A673 (cell line): ENCODE measurements at regions of chr18 and their contacts with region 1.

Region 1: DNA sequence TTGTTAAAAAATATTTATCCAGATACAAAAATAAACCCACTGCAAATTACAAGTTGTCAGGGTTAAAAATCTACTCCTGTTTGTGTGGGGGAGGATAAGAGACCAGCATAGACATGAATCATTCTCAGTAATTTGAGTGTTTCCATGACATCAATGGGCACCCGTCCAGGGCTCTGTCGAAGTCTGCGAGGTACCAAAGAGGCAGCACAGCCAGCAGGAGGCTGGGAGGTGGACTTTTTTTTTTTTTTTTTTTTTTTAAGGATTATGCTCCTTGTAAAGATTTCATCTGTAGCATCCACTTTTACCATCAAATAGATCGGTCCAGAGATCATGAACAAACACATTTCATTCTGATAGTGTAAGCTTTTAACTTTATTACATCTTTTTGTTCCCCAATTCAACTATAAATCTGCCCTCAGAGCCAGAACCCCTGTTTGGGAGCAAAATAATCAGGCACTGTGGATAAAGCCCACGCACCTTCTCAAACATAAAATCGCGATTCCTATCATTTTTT is 182.0 kb downstream of the TCF4 start:
- DNase-seq: peak; percentile 97
- H3K4me3 ChIP-seq: peak overlapping the region; percentile 43
- H3K27ac ChIP-seq: peak overlapping the region; percentile 76
- H3K4me1 ChIP-seq: peaks cover 63% of the 10 kb centered on the region
- H3K27me3 ChIP-seq: no peaks in the 10 kb centered on the region
- CTCF ChIP-seq: no peak

Region 2: DNA sequence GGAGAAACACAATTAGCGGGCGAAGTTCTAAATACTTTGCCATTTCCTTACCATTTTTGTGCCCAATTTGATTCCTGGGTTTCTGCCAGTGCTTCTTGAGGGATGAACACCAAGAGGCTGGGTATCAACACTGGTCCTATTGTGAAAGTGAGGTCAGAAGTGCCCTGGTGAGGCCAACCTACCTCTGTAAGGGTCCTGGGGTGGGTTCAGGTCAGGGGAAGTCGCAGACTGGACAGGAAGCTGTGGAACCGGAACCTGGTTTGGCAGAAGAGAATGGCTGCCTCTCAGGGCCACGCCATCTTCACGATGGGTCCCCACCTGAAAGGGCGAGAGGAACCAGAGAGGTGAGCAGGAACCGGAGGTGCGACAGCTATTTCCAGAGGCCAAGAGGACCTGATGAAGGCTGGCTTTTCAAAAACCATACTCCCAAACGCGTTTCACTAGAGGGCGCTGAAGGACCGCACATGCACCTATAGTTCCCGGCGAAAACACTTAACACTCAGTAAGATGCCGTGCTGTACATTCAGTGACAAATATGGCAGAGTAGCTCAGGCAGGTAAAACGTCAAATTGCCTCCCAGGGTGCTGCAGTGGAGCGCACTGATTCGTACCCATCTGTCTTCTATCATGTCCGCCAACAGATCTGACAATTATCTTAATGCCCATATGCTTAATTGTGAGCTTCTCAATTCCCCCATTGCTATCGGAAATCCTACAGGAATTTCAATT is 171.4 kb before region 1 on chr18:
- CTCF ChIA-PET with region 1: no interaction called
- POLR2A ChIA-PET with region 1: interaction called, 3 read pairs
- intact Hi-C with region 1: loop called (anchors 2 kb)
- DNase-seq: peak; percentile 91
- H3K4me3 ChIP-seq: peak overlapping the region; percentile 3
- H3K27ac ChIP-seq: peak overlapping the region; percentile 19
- H3K4me1 ChIP-seq: peaks cover 32% of the 10 kb centered on the region
- H3K27me3 ChIP-seq: no peaks in the 10 kb centered on the region
- CTCF ChIP-seq: peak; percentile 83

Region 3: DNA sequence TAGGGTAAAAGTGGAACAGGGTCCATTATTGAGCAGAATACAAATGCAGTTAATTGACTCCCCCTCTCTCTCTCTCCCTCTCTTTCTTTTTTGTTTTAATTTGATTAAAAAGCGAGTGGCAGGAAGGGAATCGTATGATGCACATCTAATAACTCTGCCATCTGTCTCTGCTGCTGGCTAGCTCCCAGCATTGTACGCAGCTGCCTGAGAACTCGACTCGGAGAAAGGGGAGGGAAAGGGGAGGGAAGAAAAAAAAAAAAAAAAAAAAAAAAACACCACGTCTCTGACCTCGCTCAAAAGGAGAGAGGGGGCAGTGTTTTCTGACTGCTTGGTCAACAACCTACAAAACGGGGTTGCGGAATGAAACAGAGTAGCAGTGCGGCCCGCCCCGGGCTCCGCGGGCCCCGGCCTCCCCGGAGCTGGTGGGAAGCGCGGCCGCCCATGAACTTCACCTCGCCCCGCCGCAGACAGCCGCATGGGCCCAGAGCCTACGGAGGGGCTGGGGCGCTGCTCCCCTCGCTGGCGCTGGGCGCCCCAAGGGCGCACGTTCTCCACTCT is 83.7 kb before region 1 on chr18:
- CTCF ChIA-PET with region 1: no interaction called
- POLR2A ChIA-PET with region 1: no interaction called
- intact Hi-C with region 1: loop called (anchors 5 kb)
- DNase-seq: peak; percentile 95
- H3K4me3 ChIP-seq: peak overlapping the region; percentile 60
- H3K27ac ChIP-seq: peak overlapping the region; percentile 89
- H3K4me1 ChIP-seq: peaks cover 42% of the 10 kb centered on the region
- H3K27me3 ChIP-seq: no peaks in the 10 kb centered on the region
- CTCF ChIP-seq: no peak

Region 4: DNA sequence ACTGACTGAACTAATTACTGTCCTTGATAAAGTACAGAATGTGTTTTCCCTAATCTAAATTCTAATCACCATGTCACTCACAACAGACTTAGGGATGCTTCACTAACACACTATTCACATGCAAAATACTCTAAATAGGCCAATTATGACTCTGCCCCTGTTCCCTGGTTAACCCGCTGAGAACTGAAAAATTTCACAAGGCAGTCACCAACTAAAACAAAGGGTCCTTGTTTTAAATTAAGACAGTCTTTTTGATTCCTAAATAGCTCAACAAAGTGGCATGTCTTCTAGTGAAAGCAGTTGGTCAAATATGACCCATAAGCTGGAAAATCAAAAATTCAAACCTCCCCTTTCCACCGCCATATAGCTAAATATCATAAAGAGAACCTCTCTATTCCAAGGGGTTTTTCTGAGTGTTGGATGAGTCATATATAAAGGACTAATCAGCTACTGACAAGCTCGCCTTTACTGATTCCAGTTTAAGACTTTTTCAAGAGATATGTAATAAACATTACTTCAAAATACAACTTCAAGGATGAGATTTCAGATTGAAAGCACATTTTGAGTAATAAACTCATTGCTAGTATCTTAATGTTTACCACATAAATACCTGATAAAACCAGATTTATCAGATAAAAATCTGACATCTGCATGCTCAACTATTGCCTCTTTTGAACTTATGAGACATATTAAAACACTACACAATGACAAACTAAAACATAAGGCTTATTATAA is 53.8 kb before region 1 on chr18:
- CTCF ChIA-PET with region 1: no interaction called
- POLR2A ChIA-PET with region 1: no interaction called
- intact Hi-C with region 1: loop called (anchors 5 kb)
- DNase-seq: peak; percentile 87
- H3K4me3 ChIP-seq: peak overlapping the region; percentile 4
- H3K27ac ChIP-seq: peak overlapping the region; percentile 78
- H3K4me1 ChIP-seq: peaks cover 98% of the 10 kb centered on the region
- H3K27me3 ChIP-seq: no peaks in the 10 kb centered on the region
- CTCF ChIP-seq: no peak

Region 5: GRCh38 chr18:55361492-55362250 is 44.3 kb before region 1 on chr18:
- CTCF ChIA-PET with region 1: no interaction called
- POLR2A ChIA-PET with region 1: no interaction called
- intact Hi-C with region 1: loop called (anchors 5 kb)
- DNase-seq: peak; percentile 85
- H3K4me3 ChIP-seq: no peak overlapping the region
- H3K27ac ChIP-seq: peak overlapping the region; percentile 89
- H3K4me1 ChIP-seq: peaks cover 68% of the 10 kb centered on the region
- H3K27me3 ChIP-seq: no peaks in the 10 kb centered on the region
- CTCF ChIP-seq: no peak

Region 6: GRCh38 chr18:55534547-55534946 is 128.6 kb after region 1 on chr18:
- CTCF ChIA-PET with region 1: no interaction called
- POLR2A ChIA-PET with region 1: no interaction called
- intact Hi-C with region 1: no loop called
- DNase-seq: no peak
- H3K4me3 ChIP-seq: no peak overlapping the region
- H3K27ac ChIP-seq: no peak overlapping the region
- H3K4me1 ChIP-seq: peaks cover 6% of the 10 kb centered on the region
- H3K27me3 ChIP-seq: no peaks in the 10 kb centered on the region
- CTCF ChIP-seq: no peak

Region 7: DNA sequence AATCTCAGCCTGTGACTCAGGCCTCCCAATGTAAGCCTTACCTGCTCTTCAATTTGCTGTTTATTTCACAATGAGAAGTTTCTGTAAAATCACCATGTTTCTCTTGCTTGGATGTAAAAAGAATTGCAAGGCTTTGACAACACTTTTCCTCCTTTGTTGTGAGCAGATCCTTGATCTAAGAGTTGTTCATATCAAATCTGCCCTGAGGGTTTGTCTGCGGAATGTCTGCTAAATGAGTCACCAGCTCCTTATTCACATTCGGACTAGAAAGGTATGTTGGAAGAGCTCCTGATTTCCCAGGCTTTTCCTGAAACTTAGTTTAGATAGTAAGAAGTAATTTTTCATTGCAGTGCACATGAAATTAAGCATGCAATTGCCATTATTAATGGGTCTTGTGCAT is 450.3 kb after region 1 on chr18:
- CTCF ChIA-PET with region 1: no interaction called
- POLR2A ChIA-PET with region 1: no interaction called
- intact Hi-C with region 1: loop called (anchors 5 kb)
- DNase-seq: peak; percentile 57
- H3K4me3 ChIP-seq: no peak overlapping the region
- H3K27ac ChIP-seq: no peak overlapping the region
- H3K4me1 ChIP-seq: peaks cover 37% of the 10 kb centered on the region
- H3K27me3 ChIP-seq: no peaks in the 10 kb centered on the region
- CTCF ChIP-seq: no peak

Region 8: DNA sequence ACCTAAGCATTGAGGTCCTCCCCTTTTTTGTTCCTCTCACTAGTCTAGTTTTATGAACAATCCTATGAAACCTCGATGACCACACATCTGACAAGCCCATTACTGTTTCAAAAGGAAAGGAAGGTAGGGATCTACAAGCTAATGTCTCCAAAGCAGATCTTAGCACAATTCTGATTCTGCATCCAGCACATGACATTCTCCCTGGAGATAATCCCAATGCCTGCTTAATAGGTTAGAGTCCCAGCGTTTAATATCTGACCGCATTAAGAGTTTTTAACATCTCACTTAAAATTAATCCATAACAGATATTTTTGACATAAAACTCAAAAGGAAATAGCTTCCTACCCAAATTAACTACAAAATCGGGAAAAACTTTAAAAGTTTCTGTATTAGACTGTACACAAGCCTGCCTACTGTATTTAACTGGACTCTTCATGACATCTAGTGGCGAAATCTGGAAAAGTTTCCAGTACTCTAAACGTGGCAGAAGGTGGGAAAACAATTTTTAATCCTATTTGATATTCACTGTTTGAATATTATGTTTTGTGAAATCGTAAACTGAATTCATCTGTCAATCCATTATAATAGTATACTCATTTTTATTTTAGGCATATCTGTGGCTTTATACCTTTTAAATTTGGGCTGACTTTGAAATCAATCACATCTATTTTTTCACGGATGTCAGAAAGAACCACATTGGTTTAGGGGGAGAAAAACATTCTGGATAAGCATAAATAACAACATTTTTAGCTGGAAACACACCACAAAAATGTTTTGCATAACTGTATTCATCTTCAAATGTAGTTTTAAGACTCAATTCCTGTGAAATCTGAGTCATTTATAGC is 1170.1 kb after region 1 on chr18:
- CTCF ChIA-PET with region 1: no interaction called
- POLR2A ChIA-PET with region 1: no interaction called
- intact Hi-C with region 1: loop called (anchors 10 kb)
- DNase-seq: peak; percentile 74
- H3K4me3 ChIP-seq: no peak overlapping the region
- H3K27ac ChIP-seq: no peak overlapping the region
- H3K4me1 ChIP-seq: peaks cover 11% of the 10 kb centered on the region
- H3K27me3 ChIP-seq: no peaks in the 10 kb centered on the region
- CTCF ChIP-seq: peak; percentile 73